ENCODE measurements at regions of chr1 and their contacts with region 1.

Region 1: GRCh38 chr1:11650331-11650991 is 3.8 kb downstream of the FBXO2 start:
- DNase-seq: peak; percentile 88
- ATAC-seq: peak; percentile 74

Region 2: DNA sequence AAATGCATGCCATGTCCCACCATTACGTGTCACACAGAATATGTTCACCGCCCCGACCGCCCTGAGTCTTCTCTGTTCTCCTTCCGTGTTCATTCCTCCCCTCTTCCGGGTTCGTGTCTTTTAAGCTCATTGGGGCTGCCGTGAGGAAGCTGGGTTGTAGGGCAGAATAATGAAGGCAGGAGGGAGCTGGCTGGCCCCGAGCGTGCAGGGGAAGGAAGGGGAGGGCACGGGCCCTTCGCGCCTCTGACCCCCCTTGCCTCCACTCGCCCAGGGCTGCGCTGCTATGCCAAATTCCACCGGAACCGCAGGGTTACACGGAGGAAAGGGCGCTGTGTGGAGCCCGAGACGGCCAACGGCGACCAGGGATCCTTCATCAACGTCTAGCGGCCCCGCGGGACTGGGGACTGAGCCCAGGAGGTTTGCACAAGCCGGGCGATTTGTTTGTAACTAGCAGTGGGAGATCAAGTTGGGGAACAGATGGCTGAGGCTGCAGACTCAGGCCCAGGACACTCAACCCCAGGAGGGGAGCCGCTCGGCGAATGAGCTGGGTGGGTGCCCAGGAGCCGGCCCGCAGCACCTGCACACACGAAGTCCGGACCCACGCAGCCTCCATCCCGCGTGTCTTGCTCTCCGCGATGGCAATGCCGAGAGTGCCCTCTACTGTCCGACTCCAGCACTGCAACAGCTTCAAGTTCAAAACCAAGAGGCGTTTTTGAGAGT is 69.0 kb after region 1 on chr1:
- intact Hi-C with region 1: loop called (anchors 10 kb)
- DNase-seq: peak; percentile 89
- ATAC-seq: peak; percentile 87

Region 3: GRCh38 chr1:11761988-11762406 is 111.5 kb after region 1 on chr1 and contains the start of gene C1orf167:
- intact Hi-C with region 1: no loop called
- DNase-seq: no peak
- ATAC-seq: peak; percentile 55
- total RNA-seq, gene C1orf167: 2.1 TPM

Measured in left ventricle myocardium superior (tissue), 1 donor.